ENCODE measurements at regions of chr7 and their contacts with region 1.

Region 1: DNA sequence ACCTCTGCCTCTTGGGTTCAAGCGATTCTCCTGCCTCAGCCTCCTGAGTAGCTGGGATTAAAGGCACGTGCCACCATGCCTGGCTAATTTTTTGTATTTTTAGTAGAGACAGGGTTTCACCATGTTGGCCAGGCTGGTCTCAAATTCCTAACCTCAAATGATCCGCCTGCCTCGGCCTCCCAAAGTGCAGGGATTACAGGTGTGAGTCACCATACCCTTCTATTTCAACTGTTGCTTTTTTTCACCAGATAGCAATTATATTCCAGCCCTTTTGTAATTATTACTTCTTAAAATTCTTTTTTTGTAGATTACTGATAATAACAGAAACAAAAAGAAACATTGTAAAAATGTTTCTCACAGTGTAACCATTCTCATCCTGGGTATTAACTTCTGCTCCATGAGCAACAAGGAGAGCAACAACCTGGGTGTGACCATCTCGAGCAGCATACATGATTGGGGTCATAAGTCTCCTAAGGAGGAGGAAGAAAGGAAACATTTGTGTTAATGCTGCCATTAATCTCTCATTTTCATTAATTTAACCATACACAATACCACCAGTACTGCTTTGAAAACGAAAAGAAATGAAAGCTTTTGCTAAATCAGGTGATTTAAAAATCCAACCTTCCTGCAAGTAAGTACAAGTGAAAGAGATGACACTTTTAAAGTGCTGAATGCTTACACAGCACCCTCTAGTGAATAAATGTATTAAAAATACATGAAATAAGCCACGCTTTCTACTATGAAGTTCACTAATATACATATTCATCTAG is 41.8 kb downstream of the ASZ1 start:
- DNase-seq: peak; percentile 47
- H3K4me3 ChIP-seq: no peak overlapping the region
- H3K27ac ChIP-seq: no peak overlapping the region
- H3K4me1 ChIP-seq: no peaks in the 10 kb centered on the region
- H3K27me3 ChIP-seq: no peaks in the 10 kb centered on the region
- CTCF ChIP-seq: peak in 1 of 2 donors; percentile 10
- POLR2A ChIP-seq: no peak

Region 2: DNA sequence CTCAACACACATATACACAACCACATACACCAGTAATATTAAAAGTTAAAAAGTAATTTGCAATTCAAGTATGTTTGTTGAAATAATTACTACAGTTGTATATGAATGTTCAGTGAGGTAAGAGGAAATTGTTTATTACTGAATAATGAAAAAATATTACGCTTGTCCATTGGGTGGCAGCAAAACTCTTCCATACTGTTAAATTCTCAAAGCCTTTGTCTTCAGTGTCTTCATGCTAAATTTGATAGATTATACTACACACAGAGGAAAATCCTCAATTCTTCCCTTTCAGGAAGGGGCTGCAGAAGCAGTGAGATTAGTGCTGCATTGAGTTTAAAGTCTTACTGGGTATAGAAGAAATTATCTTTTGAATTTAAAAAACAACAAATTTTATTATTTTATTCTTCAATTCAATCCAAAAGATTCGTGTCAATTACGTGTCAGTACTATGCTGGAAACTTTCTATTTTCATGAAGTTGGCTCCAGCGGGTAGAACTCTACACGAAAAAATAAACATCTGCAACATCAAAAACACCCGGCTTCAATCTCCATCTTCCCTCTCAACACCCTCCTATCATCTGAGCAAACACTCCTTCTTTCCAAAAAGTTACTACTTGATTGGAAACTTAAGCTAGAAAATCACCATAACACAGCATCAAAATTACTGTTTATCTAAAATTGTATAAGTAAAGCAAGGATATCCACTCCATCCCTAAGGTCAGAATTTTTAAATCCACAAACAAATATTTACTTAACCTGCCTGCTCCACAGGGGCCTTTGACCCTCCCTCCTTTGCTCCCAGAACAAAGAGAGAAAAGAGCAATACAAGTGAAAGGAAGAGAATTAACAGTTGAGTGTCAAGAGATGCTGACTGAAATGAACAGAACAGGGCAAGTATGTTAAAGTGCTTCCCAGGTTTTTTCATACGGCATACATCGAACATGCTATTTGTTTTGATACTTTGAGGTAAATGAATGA is 1212.2 kb before region 1 on chr7:
- CTCF ChIA-PET with region 1: no interaction called
- POLR2A ChIA-PET with region 1: no interaction called
- dilution Hi-C with region 1: no loop called
- intact Hi-C with region 1: loop called (anchors 10 kb)
- DNase-seq: peak; percentile 84
- H3K4me3 ChIP-seq: no peak overlapping the region
- H3K27ac ChIP-seq: no peak overlapping the region
- H3K4me1 ChIP-seq: no peaks in the 10 kb centered on the region
- H3K27me3 ChIP-seq: peaks cover 0 to 3% of the 10 kb centered on the region in 2 experiments
- CTCF ChIP-seq: peak in 1 of 2 donors; percentile 20
- POLR2A ChIP-seq: no peak

Region 3: DNA sequence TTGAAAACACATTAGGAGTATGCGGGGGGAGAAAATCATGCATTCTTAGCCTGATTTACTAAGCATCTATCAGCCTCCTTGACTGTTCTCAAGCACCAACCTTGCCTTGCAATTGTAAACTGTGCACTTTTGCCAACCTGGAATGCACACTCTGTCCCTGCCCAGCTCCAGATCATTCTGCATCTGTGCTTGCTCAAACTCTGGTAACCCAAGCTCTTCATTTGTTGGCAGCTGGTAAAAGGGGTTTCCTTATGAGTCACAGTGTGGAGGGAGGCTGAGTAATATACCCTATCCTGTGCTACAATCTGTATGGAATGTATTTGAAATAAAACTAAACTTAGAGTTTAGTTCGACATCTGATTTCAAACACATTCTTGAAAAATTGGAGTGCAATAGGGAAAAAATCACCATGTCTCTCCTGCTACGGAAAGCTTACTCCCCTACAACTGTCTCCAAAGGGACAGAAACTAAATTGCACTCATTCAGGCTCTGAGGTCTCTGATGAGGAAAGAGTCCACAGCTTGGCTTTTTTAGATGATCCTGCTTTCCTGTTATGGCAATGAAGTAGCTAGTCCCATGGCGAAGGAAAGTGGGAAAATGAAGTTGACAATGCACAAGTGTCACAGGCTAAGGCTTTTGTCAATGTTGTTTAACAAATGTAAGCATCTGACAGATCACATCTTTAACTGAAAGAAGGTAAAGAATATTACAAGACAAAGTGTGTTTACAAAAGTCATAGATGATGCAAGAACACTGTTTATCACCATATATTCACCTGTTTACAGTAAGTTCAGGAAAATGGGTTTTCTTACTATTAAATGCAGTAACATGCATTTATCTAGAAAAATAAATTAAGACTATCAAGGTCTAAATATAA is 1113.3 kb before region 1 on chr7:
- CTCF ChIA-PET with region 1: no interaction called
- POLR2A ChIA-PET with region 1: no interaction called
- dilution Hi-C with region 1: no loop called
- intact Hi-C with region 1: no loop called
- DNase-seq: peak; percentile 94
- H3K4me3 ChIP-seq: peak overlapping the region in 1 of 3 experiments; percentile 48
- H3K27ac ChIP-seq: peak overlapping the region; percentile 90
- H3K4me1 ChIP-seq: peaks cover 57% of the 10 kb centered on the region
- H3K27me3 ChIP-seq: no peaks in the 10 kb centered on the region
- CTCF ChIP-seq: no peak
- POLR2A ChIP-seq: no peak

Region 4: GRCh38 chr7:117312598-117313580 is 72.6 kb before region 1 on chr7:
- CTCF ChIA-PET with region 1: interaction called, 3 read pairs
- POLR2A ChIA-PET with region 1: interaction called, 3 read pairs
- dilution Hi-C with region 1: no loop called
- intact Hi-C with region 1: loop called (anchors 5 kb)
- DNase-seq: no peak
- H3K4me3 ChIP-seq: no peak overlapping the region
- H3K27ac ChIP-seq: no peak overlapping the region
- H3K4me1 ChIP-seq: no peaks in the 10 kb centered on the region
- H3K27me3 ChIP-seq: peaks cover 7 to 8% of the 10 kb centered on the region in 2 experiments
- CTCF ChIP-seq: no peak
- POLR2A ChIP-seq: no peak